Spleen (tissue), 13 donors: ENCODE measurements at regions of chr7 and their contacts with region 1.

Region 1: GRCh38 chr7:38398725-38399321 is 125.4 kb upstream of the TARP start:
- DNase-seq: peak; percentile 91
- H3K4me3 ChIP-seq: no peak overlapping the region
- H3K27ac ChIP-seq: no peak overlapping the region
- H3K4me1 ChIP-seq: peaks cover 0 to 25% (median 9%) of the 10 kb centered on the region in 6 donors
- H3K27me3 ChIP-seq: no peaks in the 10 kb centered on the region
- CTCF ChIP-seq: peak; percentile 65 to 83 (median 76)
- POLR2A ChIP-seq: no peak

Region 2: GRCh38 chr7:38660427-38661099 is 261.7 kb after region 1 on chr7:
- intact Hi-C with region 1: loop called (anchors 10 kb)
- DNase-seq: peak; percentile 81
- H3K4me3 ChIP-seq: no peak overlapping the region
- H3K27ac ChIP-seq: peak overlapping the region in 2 of 8 donors; percentile 74 to 85
- H3K4me1 ChIP-seq: peaks cover 0 to 25% (median 0%) of the 10 kb centered on the region in 6 donors
- H3K27me3 ChIP-seq: peaks cover 0 to 10% (median 0%) of the 10 kb centered on the region in 7 donors
- CTCF ChIP-seq: peak; percentile 25 to 83 (median 63)
- POLR2A ChIP-seq: no peak

Region 3: DNA sequence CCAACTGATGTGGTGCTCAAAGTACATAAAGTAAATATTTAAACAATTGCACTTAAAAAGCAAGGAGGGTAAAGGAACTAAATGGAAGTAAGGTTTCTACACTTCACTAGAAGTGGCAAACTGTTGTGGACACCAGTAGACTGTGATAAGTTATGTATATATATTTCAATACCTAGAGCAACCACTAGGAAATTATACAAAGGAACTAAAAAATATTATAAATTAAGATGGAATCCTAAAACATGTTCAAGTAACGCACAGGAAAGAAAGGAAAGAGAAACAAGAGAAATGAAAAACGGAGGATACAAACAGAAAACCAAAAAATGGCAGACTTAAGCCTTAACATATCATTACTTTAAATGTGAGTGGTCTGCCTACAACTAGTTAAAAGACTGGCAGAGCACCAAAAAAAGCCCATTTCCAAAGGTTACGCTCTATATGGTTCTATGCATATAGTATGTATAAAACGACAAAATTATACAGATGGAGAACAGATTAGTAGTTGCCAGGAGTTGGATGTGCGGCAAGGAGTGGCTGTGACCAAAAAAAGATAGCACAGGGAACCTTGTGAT is 491.1 kb after region 1 on chr7:
- intact Hi-C with region 1: no loop called
- DNase-seq: no peak
- H3K4me3 ChIP-seq: no peak overlapping the region
- H3K27ac ChIP-seq: no peak overlapping the region
- H3K4me1 ChIP-seq: no peaks in the 10 kb centered on the region
- H3K27me3 ChIP-seq: no peaks in the 10 kb centered on the region
- CTCF ChIP-seq: peak in 1 of 11 experiments; percentile 27
- POLR2A ChIP-seq: no peak

Region 4: DNA sequence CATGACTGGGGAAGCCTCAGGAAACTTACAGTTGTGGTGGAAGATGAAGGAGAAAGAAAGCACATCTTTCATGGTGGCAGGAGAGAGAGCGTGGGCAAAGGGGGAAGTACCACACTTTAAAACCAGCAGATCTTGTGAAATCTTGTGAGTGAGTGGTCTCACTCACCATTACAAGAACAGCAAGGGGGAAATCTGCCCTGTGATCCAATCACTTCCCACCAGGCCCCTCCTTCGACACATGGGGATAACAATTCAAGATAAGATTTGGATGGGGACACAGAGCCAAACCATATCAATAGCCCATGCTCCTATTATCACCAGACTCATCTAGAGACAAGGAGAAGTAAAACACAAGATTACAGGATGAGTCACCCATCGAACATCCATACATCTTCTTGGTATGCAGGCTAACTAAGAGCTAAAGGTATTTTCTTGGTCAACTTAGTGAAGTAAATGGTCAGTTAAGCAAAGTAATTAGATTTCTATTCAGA is 1112.1 kb after region 1 on chr7:
- intact Hi-C with region 1: loop called (anchors 10 kb)
- DNase-seq: no peak
- H3K4me3 ChIP-seq: no peak overlapping the region
- H3K27ac ChIP-seq: no peak overlapping the region
- H3K4me1 ChIP-seq: peaks cover 0 to 6% (median 0%) of the 10 kb centered on the region in 6 donors
- H3K27me3 ChIP-seq: no peaks in the 10 kb centered on the region
- CTCF ChIP-seq: no peak
- POLR2A ChIP-seq: no peak